ENCODE measurements at regions of chr14 and their contacts with region 1.

Region 1: DNA sequence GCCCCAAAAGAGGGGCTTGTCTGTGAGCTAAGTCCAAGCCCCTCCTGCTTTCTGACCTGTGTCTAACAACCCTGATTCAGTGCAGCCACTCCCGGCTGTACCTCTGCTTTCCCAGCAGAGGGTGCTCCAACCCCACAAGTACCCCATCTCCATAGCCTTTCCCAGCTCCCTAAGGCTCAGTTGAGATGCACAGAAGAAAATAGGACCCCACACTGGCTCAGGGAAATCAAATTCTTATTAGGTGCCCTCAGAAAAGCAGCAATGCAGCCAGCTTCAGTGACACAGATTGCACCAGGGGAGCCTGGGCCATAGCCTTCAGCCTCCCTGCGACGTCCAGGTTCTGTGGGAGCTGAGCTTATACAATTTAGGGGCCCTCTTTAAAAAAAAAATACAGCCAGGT is 49.9 kb downstream of the LRRC74A start:
- DNase-seq: peak in 2 of 3 donors; percentile 65 to 68
- ATAC-seq: peak; percentile 90
- H3K4me3 ChIP-seq: no peak overlapping the region
- H3K4me1 ChIP-seq: no peaks in the 10 kb centered on the region
- CTCF ChIP-seq: peak; percentile 71

Region 2: DNA sequence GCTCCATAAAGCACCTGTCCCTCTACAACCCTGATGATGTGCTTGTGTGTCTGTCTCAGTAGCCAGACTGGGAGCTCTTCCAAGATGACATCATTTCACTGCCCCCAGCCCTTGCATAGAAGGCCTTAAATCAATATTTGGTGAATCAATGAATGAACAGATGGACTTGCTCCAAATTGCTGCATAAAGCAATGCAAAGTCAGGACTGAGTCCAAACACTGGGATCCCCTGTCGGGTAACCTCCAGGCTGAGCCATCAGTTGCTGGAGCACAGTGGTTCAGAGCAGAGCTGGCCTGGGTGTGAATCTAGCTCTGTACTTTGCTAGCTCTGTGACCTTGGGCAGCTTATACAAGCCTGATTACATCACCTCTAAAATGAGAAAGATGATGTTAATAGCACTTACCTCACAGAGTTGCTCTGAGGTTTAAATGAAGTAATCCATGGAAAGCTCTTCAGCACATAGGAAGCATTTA is 235.1 kb before region 1 on chr14:
- intact Hi-C with region 1: no loop called
- DNase-seq: no peak
- ATAC-seq: no peak
- H3K4me3 ChIP-seq: no peak overlapping the region
- H3K4me1 ChIP-seq: no peaks in the 10 kb centered on the region
- CTCF ChIP-seq: no peak

Region 3: DNA sequence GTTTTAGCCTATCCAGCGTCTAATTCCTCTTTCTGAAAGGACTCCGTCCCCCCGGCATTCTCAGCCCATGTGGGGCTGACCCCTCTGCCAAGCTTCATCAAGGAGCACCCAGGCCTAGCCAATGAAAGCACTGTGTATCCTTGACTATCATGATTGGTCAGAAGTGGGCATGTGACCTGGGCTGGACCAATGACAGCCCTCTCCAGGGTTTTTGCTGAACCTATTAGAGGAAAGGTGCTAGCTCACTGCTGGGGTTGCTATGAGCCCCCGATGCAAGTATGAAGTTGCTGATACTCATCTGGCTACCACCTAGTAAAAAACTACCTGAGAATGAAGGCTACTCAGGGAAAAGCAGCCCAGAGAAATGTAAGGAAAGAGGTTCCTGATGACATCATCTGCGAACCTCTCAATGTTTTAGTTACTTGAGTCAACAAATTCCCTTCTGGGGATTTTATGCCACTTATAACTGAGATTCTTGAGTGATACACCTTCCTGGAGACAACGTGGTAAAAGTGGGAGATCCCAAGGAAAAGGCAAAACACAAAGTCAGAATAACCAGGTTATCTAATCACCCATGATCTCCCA is 18.3 kb after region 1 on chr14:
- intact Hi-C with region 1: no loop called
- DNase-seq: no peak
- ATAC-seq: no peak
- H3K4me3 ChIP-seq: no peak overlapping the region
- H3K4me1 ChIP-seq: no peaks in the 10 kb centered on the region
- CTCF ChIP-seq: no peak

Region 4: DNA sequence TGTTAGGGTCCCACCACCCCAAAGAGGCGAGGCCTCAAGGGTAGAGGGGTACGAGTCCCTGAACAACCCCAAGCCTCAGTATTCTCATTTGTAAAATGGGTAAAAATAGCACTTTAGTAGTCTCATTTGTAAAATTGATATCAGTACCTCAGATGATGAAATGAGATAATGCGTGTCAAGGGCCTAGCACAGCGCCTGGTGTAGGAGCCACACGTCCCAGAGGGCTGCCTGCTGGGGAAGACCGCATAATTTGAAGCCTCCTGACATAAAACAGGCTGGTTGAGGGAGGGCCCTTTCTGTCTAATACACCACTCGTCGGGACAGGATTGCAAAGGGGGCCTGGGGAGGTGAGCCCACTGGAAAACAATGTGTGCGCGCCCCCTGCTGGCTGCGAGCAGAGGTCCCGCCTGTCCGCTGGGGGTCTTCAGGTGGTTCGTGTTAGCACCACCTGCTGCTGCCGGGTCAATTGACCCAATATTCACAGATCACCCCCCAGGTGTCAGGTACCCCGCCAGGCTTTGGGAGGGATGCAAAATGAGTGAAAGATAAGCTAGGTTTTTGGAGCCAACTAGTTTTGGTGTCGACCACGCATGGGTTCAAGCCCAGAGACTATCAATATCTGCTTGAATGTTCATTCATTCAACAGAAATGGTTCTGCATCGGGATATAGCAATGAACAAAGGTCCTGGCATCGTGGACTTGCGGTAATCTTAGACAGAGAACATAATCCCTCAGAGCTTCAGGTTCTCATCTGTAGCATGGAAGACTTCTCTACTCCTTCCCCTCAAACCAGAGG is 177.2 kb after region 1 on chr14:
- intact Hi-C with region 1: loop called in 1 of 2 experiments (anchors 5 kb)
- DNase-seq: peak; percentile 75 to 78 (median 77)
- ATAC-seq: peak; percentile 66
- H3K4me3 ChIP-seq: no peak overlapping the region
- H3K4me1 ChIP-seq: peaks cover 9% of the 10 kb centered on the region
- CTCF ChIP-seq: peak; percentile 69

Region 5: GRCh38 chr14:77067632-77068514 is 191.8 kb after region 1 on chr14:
- intact Hi-C with region 1: loop called in 1 of 2 experiments (anchors 5 kb)
- DNase-seq: peak; percentile 63 to 82 (median 79)
- ATAC-seq: peak; percentile 87
- H3K4me3 ChIP-seq: no peak overlapping the region
- H3K4me1 ChIP-seq: no peaks in the 10 kb centered on the region
- CTCF ChIP-seq: peak; percentile 74

Region 6: DNA sequence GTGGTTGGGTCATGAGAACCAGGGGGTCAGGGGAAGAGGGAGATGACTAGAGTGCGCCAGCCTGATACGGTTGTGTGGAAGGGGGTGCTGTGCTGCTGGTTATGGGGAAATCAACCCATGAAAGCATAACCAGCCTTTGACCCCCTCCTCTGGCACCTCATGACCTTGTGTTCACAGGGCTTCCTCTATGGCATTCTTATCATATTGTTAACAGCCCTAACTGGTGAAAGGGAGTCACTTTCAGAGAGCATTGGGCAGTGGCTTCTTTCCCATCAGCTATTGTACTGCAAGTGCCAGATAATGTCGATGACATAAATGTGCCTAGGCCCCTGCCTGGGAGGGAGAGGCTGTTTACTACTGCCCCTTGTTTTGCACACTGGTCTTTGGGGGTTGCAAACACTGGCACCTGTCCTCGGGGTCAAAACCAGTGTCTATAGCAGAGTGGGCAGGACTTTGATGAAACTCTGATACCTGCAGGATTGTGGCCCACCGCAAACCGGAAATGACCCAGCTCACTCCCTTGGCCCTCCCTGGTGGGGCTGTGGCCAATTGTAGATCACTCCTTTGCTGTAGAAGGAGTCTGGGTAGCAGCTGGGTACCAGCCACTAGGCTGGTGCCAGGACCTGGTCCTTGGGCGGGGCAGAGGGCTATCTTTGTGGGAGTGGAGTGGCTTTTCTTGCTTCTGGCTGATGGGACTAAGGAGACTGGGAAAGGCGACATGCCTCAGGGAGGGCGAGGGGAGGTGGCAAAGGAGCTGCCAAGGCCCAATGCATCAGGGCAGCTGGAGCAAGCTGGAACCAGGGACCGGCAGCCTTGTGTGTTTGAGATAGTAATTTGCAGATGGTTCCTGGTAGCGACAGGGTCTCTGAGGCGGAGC is 304.9 kb after region 1 on chr14:
- intact Hi-C with region 1: no loop called
- DNase-seq: no peak
- ATAC-seq: no peak
- H3K4me3 ChIP-seq: no peak overlapping the region
- H3K4me1 ChIP-seq: peaks cover 34% of the 10 kb centered on the region
- CTCF ChIP-seq: no peak